Activated CD4-positive, alpha-beta T cell treated with anti-CD3 and anti-CD28 coated beads, Interleukin-2, amount 10 ng/mL, durations not matched to agents 7 days and 5 days (primary cell): ENCODE measurements at regions of chr9 and their contacts with region 1.

Region 1: DNA sequence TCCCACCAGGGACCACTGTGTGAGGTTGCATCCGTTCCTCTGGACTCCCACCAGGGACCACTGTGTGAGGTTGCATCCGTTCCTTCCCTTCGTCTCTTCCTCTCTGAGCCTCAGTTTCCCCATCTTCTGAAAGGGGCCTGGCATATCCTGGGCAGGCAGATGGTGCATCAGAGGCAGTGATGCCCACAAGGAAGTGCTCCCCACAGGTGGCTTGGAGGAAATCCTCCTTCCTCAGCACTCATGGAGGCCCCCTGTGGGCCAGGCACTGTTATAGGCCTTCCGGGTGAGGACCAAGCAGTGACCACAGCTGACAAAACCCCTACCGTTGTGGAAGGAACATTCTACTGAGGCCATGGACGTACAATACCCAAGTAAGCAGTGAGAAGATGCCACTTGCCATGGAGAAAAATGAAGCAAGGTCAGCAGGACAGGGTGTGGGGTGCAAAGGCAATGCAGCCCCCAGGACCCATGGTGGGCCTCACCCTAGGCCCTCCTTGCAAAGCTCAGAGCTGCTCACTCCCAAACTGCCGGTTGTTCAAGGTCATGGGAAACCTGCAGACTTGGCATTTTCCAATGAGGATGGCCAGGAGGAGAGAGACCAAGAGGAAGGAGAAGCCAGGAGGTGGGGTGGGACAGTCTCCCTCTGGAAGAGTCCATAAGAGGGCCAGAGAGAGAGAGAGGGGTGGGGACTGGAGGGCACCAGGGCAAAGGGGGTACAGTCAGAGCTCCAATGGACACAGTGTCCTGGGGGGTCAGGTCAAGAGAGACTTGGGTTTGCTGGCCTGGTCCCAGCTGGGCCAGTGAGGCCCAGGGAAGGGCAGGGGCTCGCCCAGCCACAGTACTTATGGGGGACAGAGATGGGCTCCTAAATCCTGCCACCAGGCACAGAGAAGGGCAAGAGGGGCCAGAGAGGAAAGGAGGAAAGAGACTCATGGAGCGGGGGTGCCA is 51.1 kb downstream of the C9orf50 start:
- DNase-seq: no peak
- H3K4me3 Mint-ChIP-seq: peak overlapping the region; percentile 54
- H3K27ac Mint-ChIP-seq: no peak overlapping the region
- H3K4me1 Mint-ChIP-seq: peaks cover 24% of the 10 kb centered on the region
- H3K27me3 Mint-ChIP-seq: peaks cover 26% of the 10 kb centered on the region

Region 2: DNA sequence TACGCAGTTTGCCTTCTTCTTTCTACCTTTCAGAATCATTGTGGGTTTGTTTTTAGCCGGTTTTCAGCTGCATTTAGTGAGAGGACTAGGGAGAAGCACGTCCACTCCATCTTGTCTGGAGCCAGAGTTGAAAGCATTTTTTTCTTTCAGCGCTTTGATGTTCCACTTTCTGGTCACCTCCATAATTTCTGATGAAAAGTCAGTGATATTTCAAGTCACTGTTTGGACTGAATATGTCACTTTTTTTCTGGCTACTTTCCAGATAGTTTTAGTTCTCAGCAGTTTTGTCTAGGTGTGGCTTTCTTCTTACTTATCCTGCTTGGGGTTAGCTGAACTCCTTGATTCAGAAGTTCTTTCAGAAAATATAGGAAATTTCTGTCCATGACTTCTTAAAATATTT is 267.8 kb before region 1 on chr9:
- CTCF ChIA-PET with region 1: no interaction called
- POLR2A ChIA-PET with region 1: no interaction called
- DNase-seq: no peak
- H3K4me3 Mint-ChIP-seq: no peak overlapping the region
- H3K27ac Mint-ChIP-seq: no peak overlapping the region
- H3K4me1 Mint-ChIP-seq: peaks cover 1% of the 10 kb centered on the region
- H3K27me3 Mint-ChIP-seq: peaks cover 19% of the 10 kb centered on the region

Region 3: DNA sequence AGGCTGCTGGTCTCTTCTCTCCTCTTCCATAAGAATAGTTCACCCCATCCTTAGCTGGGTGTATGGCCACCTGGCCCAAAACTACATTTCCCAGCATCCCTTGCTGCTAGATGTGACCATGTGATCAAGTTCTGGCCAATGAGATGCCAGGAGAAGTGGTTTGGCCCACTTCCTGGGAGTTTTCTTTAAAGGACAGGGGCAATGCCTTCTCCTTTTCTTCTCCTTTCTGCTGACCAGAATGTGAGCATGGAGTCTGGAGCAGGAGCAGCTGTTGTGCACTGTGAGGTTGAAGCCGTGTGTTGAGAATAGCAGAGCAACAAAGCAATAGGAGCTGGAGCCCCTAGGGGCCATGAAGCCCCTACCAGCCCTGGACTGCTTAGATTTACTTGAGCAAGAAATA is 14.4 kb after region 1 on chr9:
- CTCF ChIA-PET with region 1: interaction called, 25 read pairs
- POLR2A ChIA-PET with region 1: no interaction called
- DNase-seq: peak; percentile 76
- H3K4me3 Mint-ChIP-seq: no peak overlapping the region
- H3K27ac Mint-ChIP-seq: peak overlapping the region; percentile 87
- H3K4me1 Mint-ChIP-seq: peaks cover 78% of the 10 kb centered on the region
- H3K27me3 Mint-ChIP-seq: peaks cover 5% of the 10 kb centered on the region

Region 4: DNA sequence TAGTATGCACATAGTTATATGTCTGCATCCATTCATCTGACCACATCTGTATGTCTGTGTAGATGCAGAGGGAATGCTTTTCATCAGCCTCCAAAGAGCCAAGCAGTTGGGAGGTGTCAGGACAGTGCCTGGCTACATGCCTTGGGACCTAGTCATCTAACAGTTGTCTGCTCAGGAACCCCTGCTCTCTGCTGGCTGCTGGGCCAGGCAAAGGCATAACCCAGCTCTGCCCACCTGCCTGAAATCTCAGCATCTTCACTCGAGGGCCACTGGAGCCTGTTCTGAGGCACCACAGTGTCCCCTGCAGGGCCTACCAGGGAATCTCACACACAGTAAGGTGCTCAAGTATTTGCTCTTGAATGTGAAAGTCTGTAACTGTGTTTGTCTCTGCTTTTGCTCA is 47.4 kb after region 1 on chr9:
- CTCF ChIA-PET with region 1: no interaction called
- POLR2A ChIA-PET with region 1: no interaction called
- DNase-seq: no peak
- H3K4me3 Mint-ChIP-seq: no peak overlapping the region
- H3K27ac Mint-ChIP-seq: no peak overlapping the region
- H3K4me1 Mint-ChIP-seq: peaks cover 2% of the 10 kb centered on the region
- H3K27me3 Mint-ChIP-seq: peaks cover 32% of the 10 kb centered on the region